PC-3 (cell line): ENCODE measurements at regions of chr17 and their contacts with region 1.

Region 1: GRCh38 chr17:57408071-57408811 is 151.9 kb downstream of the MSI2 start:
- DNase-seq: peak; percentile 76
- ATAC-seq: peak; percentile 51
- H3K4me3 ChIP-seq: peak overlapping the region; percentile 57
- H3K27ac ChIP-seq: peak overlapping the region; percentile 96
- H3K4me1 ChIP-seq: peaks cover 37% of the 10 kb centered on the region
- H3K27me3 ChIP-seq: no peaks in the 10 kb centered on the region
- CTCF ChIP-seq: no peak

Region 2: GRCh38 chr17:57422574-57423164 is 14.4 kb after region 1 on chr17:
- CTCF ChIA-PET with region 1: no interaction called
- POLR2A ChIA-PET with region 1: interaction called, 15 read pairs
- intact Hi-C with region 1: no loop called
- DNase-seq: peak; percentile 87
- ATAC-seq: peak; percentile 57
- H3K4me3 ChIP-seq: no peak overlapping the region
- H3K27ac ChIP-seq: peak overlapping the region; percentile 86
- H3K4me1 ChIP-seq: peaks cover 59% of the 10 kb centered on the region
- H3K27me3 ChIP-seq: no peaks in the 10 kb centered on the region
- CTCF ChIP-seq: no peak

Region 3: DNA sequence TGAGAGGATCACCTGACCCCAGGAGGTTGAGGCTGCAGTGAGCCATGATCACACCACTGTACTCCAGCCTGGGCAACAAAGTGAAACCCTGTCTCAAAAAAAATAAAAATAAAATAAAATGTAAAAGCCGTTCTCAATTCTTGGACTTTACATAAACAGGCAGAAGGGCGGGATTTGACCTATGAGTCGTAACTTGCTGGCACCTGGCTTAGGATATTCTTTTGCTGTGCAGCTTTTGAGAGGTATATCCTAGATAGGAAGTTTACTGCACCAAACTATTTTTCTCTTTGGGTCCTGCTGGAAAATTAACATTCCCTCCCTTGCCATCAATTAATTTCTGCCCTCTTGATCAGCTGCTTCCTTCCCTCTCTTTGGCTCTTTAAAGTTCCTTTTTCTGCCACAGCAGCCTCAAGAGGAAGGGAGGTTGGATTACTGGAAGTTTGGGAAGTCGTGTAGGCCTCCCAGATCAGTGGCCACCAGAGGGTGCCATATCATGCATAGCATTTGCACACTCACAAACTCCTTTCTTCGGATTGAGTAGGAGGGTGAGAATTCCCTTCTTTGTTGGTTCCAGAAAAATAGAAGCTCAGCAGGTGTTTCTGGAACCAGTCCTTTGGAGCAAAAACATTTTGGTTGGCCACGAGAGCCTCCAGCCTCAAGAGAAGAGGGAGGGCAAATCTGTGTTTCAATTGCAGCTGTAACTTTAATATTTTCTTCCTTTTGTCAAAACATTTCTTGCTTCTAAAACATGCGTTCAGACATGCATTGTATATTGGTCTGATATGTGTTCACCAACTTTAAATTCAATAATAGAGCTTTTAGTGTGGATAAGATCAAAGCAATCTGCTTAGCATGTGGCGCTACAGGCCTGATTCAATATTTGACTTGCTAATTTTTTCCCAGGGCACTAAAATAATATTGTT is 189.6 kb after region 1 on chr17:
- CTCF ChIA-PET with region 1: no interaction called
- POLR2A ChIA-PET with region 1: no interaction called
- intact Hi-C with region 1: no loop called
- DNase-seq: peak; percentile 85
- ATAC-seq: peak; percentile 90
- H3K4me3 ChIP-seq: no peak overlapping the region
- H3K27ac ChIP-seq: peak overlapping the region; percentile 38; the same call in 1 of the 2 replicates
- H3K4me1 ChIP-seq: peaks cover 6% of the 10 kb centered on the region
- H3K27me3 ChIP-seq: no peaks in the 10 kb centered on the region
- CTCF ChIP-seq: peak; percentile 98